ENCODE measurements at regions of chr12 and their contacts with region 1.

Region 1: DNA sequence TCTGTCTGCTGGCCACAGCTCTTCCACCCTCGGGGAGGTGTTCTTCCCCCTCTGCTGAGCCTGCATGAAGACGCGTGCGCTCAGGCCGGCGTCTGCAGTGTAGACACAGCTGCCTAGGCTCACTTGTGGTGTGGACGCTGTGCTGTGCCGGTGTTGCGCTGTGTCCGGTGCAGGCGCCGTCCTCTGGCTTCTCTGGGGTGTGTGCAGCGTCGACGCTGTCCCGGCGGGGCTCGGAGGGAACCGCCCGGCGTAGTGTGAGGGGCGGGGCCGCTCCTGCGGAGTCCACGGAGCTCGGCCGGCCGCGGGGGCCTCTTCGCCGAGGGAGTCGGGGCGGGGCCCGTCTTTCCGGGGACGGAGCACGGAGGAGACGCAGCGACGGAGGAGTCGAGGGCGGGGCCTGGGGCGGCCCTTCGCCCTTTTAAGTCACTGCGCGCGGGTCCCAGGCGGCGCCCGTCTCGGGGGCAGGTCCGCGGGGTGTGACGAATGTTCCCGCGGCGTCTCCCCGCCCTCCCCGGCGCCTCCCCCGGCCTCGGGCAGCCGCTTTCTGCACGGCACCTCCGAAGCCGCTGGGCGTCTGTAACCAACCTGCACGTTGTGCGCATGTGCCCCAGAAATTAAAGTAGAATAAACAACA is 45.2 kb downstream of the NOC4L start:
- DNase-seq: peak; percentile 92
- H3K4me3 Mint-ChIP-seq: peak overlapping the region; percentile 89
- H3K27ac Mint-ChIP-seq: peak overlapping the region; percentile 50
- H3K4me1 Mint-ChIP-seq: peaks cover 31% of the 10 kb centered on the region
- H3K27me3 Mint-ChIP-seq: no peaks in the 10 kb centered on the region

Region 2: GRCh38 chr12:132144115-132144812 is 45.2 kb before region 1 on chr12 and contains the starts of genes DDX51 and NOC4L:
- CTCF ChIA-PET with region 1: no interaction called
- intact Hi-C with region 1: loop called (anchors 1 kb)
- DNase-seq: peak; percentile 94
- H3K4me3 Mint-ChIP-seq: peak within 1 kb of the TSS; percentile 90
- H3K27ac Mint-ChIP-seq: peak within 1 kb of the TSS; percentile 87
- H3K4me1 Mint-ChIP-seq: peaks cover 31% of the 10 kb centered on the region
- H3K27me3 Mint-ChIP-seq: no peaks in the 10 kb centered on the region
- total RNA-seq, gene DDX51: 18.8 to 20.0 TPM
- total RNA-seq, gene NOC4L: 27.1 to 27.4 TPM

Region 3: DNA sequence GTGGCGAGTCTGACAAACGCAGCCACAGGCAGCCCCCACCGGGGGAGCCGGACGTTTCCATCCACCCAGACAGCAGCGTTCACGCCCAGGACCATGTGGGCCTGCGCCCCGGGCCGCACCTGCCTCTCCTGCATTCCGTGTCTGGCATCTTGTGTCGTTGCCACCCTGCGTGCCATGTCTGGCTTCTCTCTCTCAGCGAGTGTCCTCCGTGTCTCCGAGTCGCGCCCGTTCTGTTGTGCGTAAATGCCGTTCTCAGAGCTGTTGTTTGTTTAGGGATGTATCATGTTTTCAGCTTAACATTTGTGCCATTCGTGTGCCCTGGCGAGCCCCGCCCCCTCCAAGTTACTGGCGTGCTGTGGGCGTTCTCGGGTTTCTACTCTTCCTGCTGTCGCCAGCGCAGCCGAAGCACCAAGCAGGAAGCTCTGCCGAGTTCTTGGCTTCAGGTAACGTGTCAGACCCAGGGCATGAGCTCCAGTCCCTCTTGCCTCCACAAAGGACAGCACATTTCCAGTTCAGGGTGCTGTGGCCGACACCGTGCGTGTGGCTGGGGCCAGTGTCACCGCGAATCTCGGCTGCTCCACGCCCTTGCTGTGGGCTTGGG is 10.6 kb before region 1 on chr12:
- CTCF ChIA-PET with region 1: interaction called, 4 read pairs
- intact Hi-C with region 1: loop called (anchors 1 kb)
- DNase-seq: peak; percentile 56
- H3K4me3 Mint-ChIP-seq: peak overlapping the region; percentile 61
- H3K27ac Mint-ChIP-seq: no peak overlapping the region
- H3K4me1 Mint-ChIP-seq: peaks cover 28% of the 10 kb centered on the region
- H3K27me3 Mint-ChIP-seq: no peaks in the 10 kb centered on the region

Region 4: GRCh38 chr12:132475304-132476037 is 286.0 kb after region 1 on chr12:
- CTCF ChIA-PET with region 1: no interaction called
- intact Hi-C with region 1: loop called (anchors 2 kb)
- DNase-seq: peak; percentile 44
- H3K4me3 Mint-ChIP-seq: peak overlapping the region; percentile 46
- H3K27ac Mint-ChIP-seq: no peak overlapping the region
- H3K4me1 Mint-ChIP-seq: peaks cover 32% of the 10 kb centered on the region
- H3K27me3 Mint-ChIP-seq: no peaks in the 10 kb centered on the region

Measured in activated naive CD4-positive, alpha-beta T cell treated with anti-CD3 and anti-CD28 coated beads for 36 hours (primary cell).